ENCODE measurements at regions of chr9 and their contacts with region 1.

Region 1: GRCh38 chr9:35646533-35647265 is 4.0 kb downstream of the SIT1 start:
- DNase-seq: peak; percentile 88
- H3K4me3 Mint-ChIP-seq: peak overlapping the region; percentile 77
- H3K27ac Mint-ChIP-seq: peak overlapping the region; percentile 93
- H3K4me1 Mint-ChIP-seq: peaks cover 12% of the 10 kb centered on the region
- H3K27me3 Mint-ChIP-seq: no peaks in the 10 kb centered on the region
- CTCF ChIP-seq: peak; percentile 95

Region 2: GRCh38 chr9:35603987-35604577 is 42.6 kb before region 1 on chr9:
- CTCF ChIA-PET with region 1: interaction called, 5 read pairs
- POLR2A ChIA-PET with region 1: interaction called, 63 read pairs
- intact Hi-C with region 1: loop called (anchors 1 kb)
- DNase-seq: peak; percentile 99
- H3K4me3 Mint-ChIP-seq: peak overlapping the region; percentile 97
- H3K27ac Mint-ChIP-seq: peak overlapping the region; percentile 99
- H3K4me1 Mint-ChIP-seq: peaks cover 28% of the 10 kb centered on the region
- H3K27me3 Mint-ChIP-seq: no peaks in the 10 kb centered on the region
- CTCF ChIP-seq: peak; percentile 69

Region 3: DNA sequence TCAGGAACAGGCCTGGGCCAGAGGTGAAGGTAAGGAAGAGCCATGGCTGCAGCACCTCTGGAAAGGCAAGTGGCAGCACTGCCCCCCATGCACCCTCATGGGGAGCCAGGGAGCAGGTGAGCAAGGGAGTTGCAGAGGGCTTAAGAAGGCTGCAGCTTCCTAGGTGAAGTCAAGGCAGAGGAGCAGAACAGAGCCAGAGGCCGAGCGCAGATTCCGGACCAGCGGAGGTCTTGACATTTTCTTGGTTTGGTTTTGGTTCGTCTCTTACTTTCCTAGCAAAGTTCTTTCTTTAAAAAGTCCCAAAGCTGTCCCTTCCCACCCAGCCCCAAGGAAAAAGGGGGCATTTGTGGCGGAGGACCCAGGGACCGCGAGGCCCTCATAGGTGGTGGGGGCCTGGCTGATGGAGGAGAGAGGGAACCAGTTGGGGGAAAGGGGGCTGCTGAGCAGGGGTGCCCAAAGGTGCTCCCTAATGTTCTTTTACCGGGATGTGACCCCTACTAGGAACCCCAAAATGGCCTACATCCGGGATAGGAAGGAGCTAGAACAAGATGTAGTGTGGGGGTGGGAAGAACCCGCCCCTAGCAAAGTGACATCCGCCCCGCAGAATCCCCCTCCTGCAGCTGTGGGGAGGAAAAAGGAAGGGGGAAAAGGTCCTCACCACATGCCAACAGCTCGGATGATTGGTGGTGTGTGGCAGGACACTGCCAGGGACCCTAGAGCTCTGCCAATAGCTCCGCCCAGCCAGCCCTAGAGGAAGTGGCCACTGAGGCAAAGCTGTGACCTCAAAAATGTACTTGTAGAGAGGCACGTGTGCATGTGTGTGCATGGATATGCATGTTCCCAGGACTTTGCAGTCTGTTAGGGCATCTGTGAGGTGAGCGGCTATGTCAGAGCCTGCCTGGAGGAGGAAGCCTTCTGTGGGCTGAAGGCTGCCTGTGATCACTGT is 27.6 kb before region 1 on chr9:
- CTCF ChIA-PET with region 1: interaction called, 14 read pairs
- POLR2A ChIA-PET with region 1: no interaction called
- intact Hi-C with region 1: no loop called
- DNase-seq: no peak
- H3K4me3 Mint-ChIP-seq: no peak overlapping the region
- H3K27ac Mint-ChIP-seq: no peak overlapping the region
- H3K4me1 Mint-ChIP-seq: no peaks in the 10 kb centered on the region
- H3K27me3 Mint-ChIP-seq: peaks cover 40% of the 10 kb centered on the region
- CTCF ChIP-seq: no peak

Region 4: GRCh38 chr9:35690431-35691333 is 44.0 kb after region 1 on chr9:
- CTCF ChIA-PET with region 1: interaction called, 28 read pairs
- POLR2A ChIA-PET with region 1: interaction called, 24 read pairs
- intact Hi-C with region 1: no loop called
- DNase-seq: peak; percentile 52
- H3K4me3 Mint-ChIP-seq: peak overlapping the region; percentile 79
- H3K27ac Mint-ChIP-seq: peak overlapping the region; percentile 72
- H3K4me1 Mint-ChIP-seq: peaks cover 24% of the 10 kb centered on the region
- H3K27me3 Mint-ChIP-seq: no peaks in the 10 kb centered on the region
- CTCF ChIP-seq: no peak

Region 5: GRCh38 chr9:35748858-35749514 is 102.3 kb after region 1 on chr9 and contains the starts of genes GBA2 and RGP1:
- CTCF ChIA-PET with region 1: interaction called, 20 read pairs
- POLR2A ChIA-PET with region 1: interaction called, 17 read pairs
- intact Hi-C with region 1: no loop called
- DNase-seq: peak; percentile 77
- H3K4me3 Mint-ChIP-seq: peak within 1 kb of the TSS; percentile 94
- H3K27ac Mint-ChIP-seq: peak within 1 kb of the TSS; percentile 85
- H3K4me1 Mint-ChIP-seq: peaks cover 31% of the 10 kb centered on the region
- H3K27me3 Mint-ChIP-seq: no peaks in the 10 kb centered on the region
- CTCF ChIP-seq: no peak
- total RNA-seq, gene GBA2: 51.3 and 55.2 TPM in 2 replicates
- total RNA-seq, gene RGP1: 33.8 and 35.8 TPM in 2 replicates